PC-3 (cell line): ENCODE measurements at regions of chr11 and their contacts with region 1.

Region 1: DNA sequence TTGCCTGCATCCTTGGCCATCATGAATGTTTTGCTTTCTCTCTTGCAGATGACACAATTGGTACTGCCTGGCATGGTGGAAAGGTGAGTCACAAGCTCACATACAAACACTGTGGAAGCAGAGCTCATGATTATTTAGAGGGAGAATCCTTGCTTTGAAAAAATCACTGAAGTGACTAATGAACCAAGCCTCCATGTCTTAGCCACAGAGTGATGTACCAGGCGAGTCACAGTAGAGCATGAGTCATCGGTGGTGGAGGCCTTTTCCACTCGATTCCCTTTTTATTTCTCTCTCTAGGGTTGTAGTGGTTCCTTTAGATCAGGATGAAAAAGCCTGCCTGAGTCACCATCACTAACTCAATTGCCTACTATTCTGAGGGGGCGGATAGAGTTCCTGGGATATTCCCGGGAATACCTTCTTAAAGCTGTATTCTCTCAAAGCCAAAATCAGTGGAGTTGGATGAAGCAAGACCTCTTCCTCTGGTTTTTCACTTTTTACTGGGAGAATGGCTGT is 49.6 kb upstream of the ALKBH3 start:
- DNase-seq: peak; percentile 97
- ATAC-seq: peak; percentile 100
- H3K4me3 ChIP-seq: no peak overlapping the region
- H3K27ac ChIP-seq: peak overlapping the region; percentile 60
- H3K4me1 ChIP-seq: peaks cover 20% of the 10 kb centered on the region
- H3K27me3 ChIP-seq: no peaks in the 10 kb centered on the region
- CTCF ChIP-seq: no peak

Region 2: DNA sequence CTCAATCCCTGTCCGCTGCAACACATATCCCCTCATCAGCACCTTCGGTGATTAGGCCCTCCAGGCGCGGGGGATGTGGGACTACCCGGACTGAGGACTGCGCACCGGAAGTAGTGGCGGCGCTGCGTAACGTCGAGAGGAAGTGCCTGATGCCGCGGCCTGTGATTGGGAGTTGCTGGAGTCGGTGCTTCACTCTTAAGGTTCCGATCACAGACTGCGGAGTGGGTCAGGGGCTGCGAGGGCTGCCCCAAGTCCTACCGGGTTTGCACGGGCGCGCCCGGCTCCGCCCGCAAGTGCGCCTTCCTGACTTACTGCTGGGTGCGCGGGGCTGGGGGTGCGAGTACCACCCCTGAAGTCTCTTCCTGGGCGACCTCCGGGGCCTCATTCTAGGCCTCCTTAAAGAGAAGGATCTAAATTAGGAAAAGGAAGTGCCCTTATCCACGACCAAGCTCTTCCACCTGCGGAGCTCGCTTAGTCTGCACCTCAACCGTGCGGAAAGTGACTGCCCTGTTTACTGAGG is 49.7 kb after region 1 on chr11 and contains the start of gene ALKBH3:
- CTCF ChIA-PET with region 1: no interaction called
- POLR2A ChIA-PET with region 1: no interaction called
- intact Hi-C with region 1: loop called (anchors 2 kb)
- DNase-seq: peak; percentile 91
- ATAC-seq: peak; percentile 98
- H3K4me3 ChIP-seq: peak within 1 kb of the TSS; percentile 91
- H3K27ac ChIP-seq: no peak within 1 kb of the TSS
- H3K4me1 ChIP-seq: peaks cover 12% of the 10 kb centered on the region
- H3K27me3 ChIP-seq: no peaks in the 10 kb centered on the region
- CTCF ChIP-seq: no peak
- total RNA-seq, gene ALKBH3: 55.5 and 60.2 TPM in 2 replicates